HAP-1 (cell line): ENCODE measurements at regions of chr20 and their contacts with region 1.

Region 1: DNA sequence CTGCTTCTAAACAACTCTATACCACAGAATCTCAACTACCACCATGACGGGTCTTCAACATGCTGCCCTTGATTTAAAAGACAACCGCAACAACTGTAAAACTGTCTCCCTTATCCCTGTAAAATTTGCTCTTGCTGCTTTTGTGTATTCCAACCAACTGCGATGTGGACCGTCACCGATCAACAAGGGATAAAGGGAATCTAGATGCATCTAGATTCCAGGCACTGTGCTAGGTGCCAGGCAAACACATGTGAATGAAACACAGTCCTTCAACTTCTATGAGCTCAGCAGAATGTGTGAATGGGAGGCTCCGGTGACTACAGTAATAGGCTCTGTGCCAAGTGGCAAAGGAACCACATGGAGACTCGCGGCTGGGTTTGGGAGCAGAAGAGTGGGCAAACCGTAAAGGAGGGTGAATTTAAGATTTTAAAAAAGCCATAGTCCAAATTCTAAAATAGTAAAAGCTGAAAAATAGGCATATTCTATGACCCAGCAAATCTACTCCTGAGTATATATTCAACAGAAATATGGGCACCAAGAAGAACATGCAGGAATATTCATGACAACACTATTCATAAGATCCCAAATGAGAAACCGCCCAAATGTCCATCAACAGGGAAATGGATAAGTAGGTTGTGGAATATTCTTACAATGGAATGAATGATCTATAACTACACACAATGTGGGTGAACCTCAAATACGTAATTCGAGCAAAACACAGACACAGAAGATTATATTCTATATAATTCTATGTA is 3.7 kb upstream of the PRND start:
- DNase-seq: no peak
- H3K4me3 ChIP-seq: no peak overlapping the region
- H3K4me1 ChIP-seq: peaks cover 11% of the 10 kb centered on the region
- H3K27me3 ChIP-seq: no peaks in the 10 kb centered on the region

Region 2: GRCh38 chr20:4613718-4614620 is 104.0 kb before region 1 on chr20:
- in situ Hi-C with region 1: loop called (anchors 5 kb)
- DNase-seq: peak in 1 of 2 experiments; percentile 72
- H3K4me3 ChIP-seq: no peak overlapping the region
- H3K4me1 ChIP-seq: no peaks in the 10 kb centered on the region
- H3K27me3 ChIP-seq: no peaks in the 10 kb centered on the region